ENCODE measurements at regions of chr21 and their contacts with region 1.

Region 1: GRCh38 chr21:29232601-29233546 is 65.8 kb upstream of the BACH1 start:
- DNase-seq: no peak
- H3K4me3 Mint-ChIP-seq: no peak overlapping the region
- H3K27ac Mint-ChIP-seq: peak overlapping the region; percentile 10
- H3K4me1 Mint-ChIP-seq: peaks cover 50% of the 10 kb centered on the region
- H3K27me3 Mint-ChIP-seq: peaks cover 24% of the 10 kb centered on the region

Region 2: GRCh38 chr21:28554660-28555475 is 678.0 kb before region 1 on chr21:
- CTCF ChIA-PET with region 1: no interaction called
- POLR2A ChIA-PET with region 1: no interaction called
- intact Hi-C with region 1: no loop called
- DNase-seq: no peak
- H3K4me3 Mint-ChIP-seq: no peak overlapping the region
- H3K27ac Mint-ChIP-seq: no peak overlapping the region
- H3K4me1 Mint-ChIP-seq: no peaks in the 10 kb centered on the region
- H3K27me3 Mint-ChIP-seq: no peaks in the 10 kb centered on the region

Region 3: DNA sequence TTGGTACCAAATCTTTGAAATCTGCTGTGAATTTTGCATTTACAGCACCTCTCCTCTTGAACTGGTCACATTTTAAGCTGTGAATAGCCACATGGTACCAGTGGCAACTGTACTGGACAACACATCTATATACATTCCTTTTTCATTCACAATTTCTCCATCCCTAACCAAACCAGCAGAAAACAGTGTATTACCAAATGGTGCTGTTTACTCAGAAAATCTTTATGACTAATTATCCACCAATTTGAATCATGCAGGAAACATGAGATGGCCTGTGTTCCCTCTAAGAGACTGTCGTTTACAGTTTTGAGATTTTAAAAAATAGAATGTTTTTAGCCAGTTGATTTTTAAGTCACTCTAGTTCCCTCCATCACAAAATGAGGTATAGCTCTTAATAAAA is 141.8 kb before region 1 on chr21:
- CTCF ChIA-PET with region 1: no interaction called
- POLR2A ChIA-PET with region 1: no interaction called
- intact Hi-C with region 1: loop called (anchors 2 kb)
- DNase-seq: no peak
- H3K4me3 Mint-ChIP-seq: no peak overlapping the region
- H3K27ac Mint-ChIP-seq: peak overlapping the region; percentile 38
- H3K4me1 Mint-ChIP-seq: peaks cover 15% of the 10 kb centered on the region
- H3K27me3 Mint-ChIP-seq: no peaks in the 10 kb centered on the region

Region 4: GRCh38 chr21:29195981-29196669 is 36.7 kb before region 1 on chr21:
- CTCF ChIA-PET with region 1: interaction called, 3 read pairs
- POLR2A ChIA-PET with region 1: interaction called, 4 read pairs
- intact Hi-C with region 1: loop called (anchors 1 kb)
- DNase-seq: peak; percentile 85
- H3K4me3 Mint-ChIP-seq: peak overlapping the region; percentile 70
- H3K27ac Mint-ChIP-seq: peak overlapping the region; percentile 80
- H3K4me1 Mint-ChIP-seq: peaks cover 34% of the 10 kb centered on the region
- H3K27me3 Mint-ChIP-seq: peaks cover 3% of the 10 kb centered on the region

Region 5: DNA sequence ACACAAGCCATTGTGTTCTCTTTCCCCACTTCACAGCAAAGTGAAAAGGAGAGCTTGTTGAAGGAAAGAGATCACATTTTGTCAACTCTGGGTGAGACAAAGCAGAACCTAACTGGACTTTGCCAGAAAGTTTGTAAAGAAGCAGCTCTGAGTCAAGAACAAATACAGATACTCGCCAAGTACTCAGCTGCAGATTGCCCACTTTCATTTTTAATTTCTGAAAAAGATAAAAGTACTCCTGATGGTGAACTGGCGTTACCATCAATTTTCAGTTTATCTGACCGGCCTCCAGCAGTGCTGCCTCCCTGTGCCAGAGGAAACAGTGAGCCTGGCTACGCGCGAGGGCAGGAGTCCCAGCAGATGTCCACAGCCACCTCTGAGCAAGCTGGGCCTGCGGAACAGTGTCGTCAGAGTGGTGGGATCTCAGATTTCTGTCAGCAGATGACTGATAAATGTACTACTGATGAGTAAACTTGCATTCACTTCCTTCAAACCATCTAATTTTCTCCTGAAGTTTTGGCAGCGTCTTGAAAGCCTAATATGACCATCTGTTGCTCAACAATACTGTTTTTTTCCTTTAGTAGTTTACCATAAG is 109.6 kb after region 1 on chr21:
- CTCF ChIA-PET with region 1: interaction called, 5 read pairs
- POLR2A ChIA-PET with region 1: no interaction called
- intact Hi-C with region 1: loop called (anchors 1 kb)
- DNase-seq: peak; percentile 84
- H3K4me3 Mint-ChIP-seq: peak overlapping the region; percentile 53
- H3K27ac Mint-ChIP-seq: peak overlapping the region; percentile 84
- H3K4me1 Mint-ChIP-seq: peaks cover 34% of the 10 kb centered on the region
- H3K27me3 Mint-ChIP-seq: no peaks in the 10 kb centered on the region

Measured in activated CD4-positive, alpha-beta memory T cell treated with anti-CD3 and anti-CD28 coated beads for 36 hours (primary cell).